ENCODE measurements at regions of chr22 and their contacts with region 1.

Region 1: DNA sequence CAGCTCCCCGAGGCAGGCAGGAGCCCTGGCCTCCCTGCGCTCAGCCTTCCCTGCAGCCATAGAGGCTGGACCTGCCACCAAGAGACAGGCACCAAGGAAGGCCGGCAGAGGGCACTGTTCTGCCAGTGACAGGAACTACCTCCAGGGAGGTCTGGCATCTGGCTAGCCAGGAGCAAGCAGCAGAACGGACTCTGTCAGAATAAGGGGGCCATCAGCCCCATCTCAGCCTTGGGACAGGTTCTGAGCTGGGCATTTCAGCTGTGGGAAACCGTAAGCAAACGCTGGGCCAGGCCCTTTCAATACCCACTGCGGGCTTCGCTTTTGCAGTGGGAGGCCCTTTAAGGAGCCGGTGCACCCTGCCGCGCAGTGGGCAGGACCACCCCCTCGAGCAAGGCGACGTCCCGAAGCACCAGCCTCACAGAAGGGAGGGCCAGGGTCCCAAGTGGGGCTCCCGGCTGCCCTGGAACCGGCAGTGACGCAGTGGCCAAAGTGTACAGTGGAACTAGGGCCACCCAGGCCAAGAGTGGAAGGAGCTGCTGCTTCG is 18.2 kb downstream of the IFT27 start:
- DNase-seq: peak; percentile 75
- H3K4me3 ChIP-seq: no peak overlapping the region
- H3K27ac ChIP-seq: no peak overlapping the region
- H3K4me1 ChIP-seq: no peaks in the 10 kb centered on the region
- H3K27me3 ChIP-seq: peaks cover 17% of the 10 kb centered on the region

Region 2: GRCh38 chr22:36552289-36552688 is 205.5 kb before region 1 on chr22:
- in situ Hi-C with region 1: loop called (anchors 10 kb)
- DNase-seq: no peak
- H3K4me3 ChIP-seq: no peak overlapping the region
- H3K27ac ChIP-seq: no peak overlapping the region
- H3K4me1 ChIP-seq: peaks cover 2% of the 10 kb centered on the region
- H3K27me3 ChIP-seq: peaks cover 27% of the 10 kb centered on the region

Region 3: DNA sequence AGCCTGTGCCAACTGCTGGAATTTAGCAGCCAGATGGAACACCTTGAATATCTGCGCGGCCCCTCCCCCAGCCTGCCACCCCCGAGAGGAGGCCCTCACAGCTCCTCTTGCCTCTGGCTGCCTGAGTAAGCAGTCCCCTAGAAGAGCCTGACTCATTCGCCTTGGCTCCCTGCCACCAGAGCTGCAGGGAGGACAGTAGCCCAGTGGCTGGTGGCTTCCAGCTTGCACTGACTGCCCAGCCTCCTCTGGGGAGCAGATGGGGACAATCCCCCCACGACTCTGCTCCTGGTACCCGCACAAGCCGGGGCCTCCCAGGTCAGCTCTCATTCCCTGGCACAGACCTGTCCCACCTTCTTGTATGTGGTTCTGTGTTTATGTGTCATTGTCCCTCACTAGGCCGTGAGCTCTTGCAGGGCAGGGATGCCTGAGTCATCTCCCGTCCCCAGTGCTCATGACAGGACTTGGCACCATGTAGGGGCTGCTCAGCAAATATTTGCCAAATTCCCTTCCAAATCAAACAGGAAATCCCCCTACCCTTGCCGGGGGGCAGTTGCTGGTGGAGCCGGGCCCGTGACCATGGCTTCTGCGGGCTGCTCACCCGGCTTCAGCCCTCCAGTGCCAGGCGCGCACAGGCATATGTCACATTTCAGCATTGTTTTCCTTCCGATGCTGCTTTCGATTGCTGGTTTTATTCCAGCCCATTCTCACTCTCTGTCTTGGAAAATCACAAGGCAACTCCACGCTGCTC is 97.8 kb before region 1 on chr22:
- in situ Hi-C with region 1: no loop called
- DNase-seq: peak; percentile 96
- H3K4me3 ChIP-seq: peak overlapping the region; percentile 33; the same call in 1 of the 2 replicates
- H3K27ac ChIP-seq: no peak overlapping the region
- H3K4me1 ChIP-seq: peaks cover 21% of the 10 kb centered on the region
- H3K27me3 ChIP-seq: peaks cover 34% of the 10 kb centered on the region